ENCODE measurements at regions of chr7 and their contacts with region 1.

Region 1: GRCh38 chr7:130069978-130070860 is at the start of gene KLHDC10:
- DNase-seq: peak; percentile 98
- H3K4me3 ChIP-seq: peak within 1 kb of the TSS; percentile 92
- H3K27ac ChIP-seq: peak within 1 kb of the TSS; percentile 24
- H3K27me3 ChIP-seq: no peaks in the 10 kb centered on the region
- CTCF ChIP-seq: no peak
- polyA plus RNA-seq, gene KLHDC10: 23.3 and 29.7 TPM in 2 replicates

Region 2: GRCh38 chr7:130084037-130084875 is 14.0 kb after region 1 on chr7:
- CTCF ChIA-PET with region 1: interaction called, 26 read pairs
- POLR2A ChIA-PET with region 1: no interaction called
- DNase-seq: no peak
- H3K4me3 ChIP-seq: no peak overlapping the region
- H3K27ac ChIP-seq: no peak overlapping the region
- H3K27me3 ChIP-seq: no peaks in the 10 kb centered on the region
- CTCF ChIP-seq: peak; percentile 34

Region 3: GRCh38 chr7:130096243-130096827 is 26.1 kb after region 1 on chr7:
- CTCF ChIA-PET with region 1: interaction called, 17 read pairs
- POLR2A ChIA-PET with region 1: no interaction called
- DNase-seq: no peak
- H3K4me3 ChIP-seq: no peak overlapping the region
- H3K27ac ChIP-seq: no peak overlapping the region
- H3K27me3 ChIP-seq: no peaks in the 10 kb centered on the region
- CTCF ChIP-seq: peak; percentile 44

Region 4: DNA sequence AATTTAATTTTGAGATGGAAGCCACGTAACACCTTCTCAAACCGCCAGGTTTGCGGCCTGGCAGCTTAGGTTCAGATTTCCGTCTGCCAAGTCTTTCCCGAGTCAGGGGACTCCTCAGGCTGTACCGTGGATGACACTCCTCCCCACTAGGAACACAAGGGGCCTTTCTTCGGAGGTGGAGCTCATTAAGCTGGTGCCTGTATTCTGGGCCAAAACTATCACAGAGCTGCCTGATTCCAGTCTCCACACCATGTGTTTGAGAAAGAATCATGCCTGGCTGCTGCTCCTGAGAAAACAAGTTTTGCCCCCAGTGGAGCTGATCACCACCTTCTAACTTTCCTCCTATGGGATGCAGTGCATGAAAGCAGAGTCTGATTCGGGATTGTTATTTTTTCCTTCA is 90.2 kb after region 1 on chr7:
- CTCF ChIA-PET with region 1: no interaction called
- POLR2A ChIA-PET with region 1: no interaction called
- DNase-seq: no peak
- H3K4me3 ChIP-seq: no peak overlapping the region
- H3K27ac ChIP-seq: no peak overlapping the region
- H3K27me3 ChIP-seq: no peaks in the 10 kb centered on the region
- CTCF ChIP-seq: no peak

Region 5: DNA sequence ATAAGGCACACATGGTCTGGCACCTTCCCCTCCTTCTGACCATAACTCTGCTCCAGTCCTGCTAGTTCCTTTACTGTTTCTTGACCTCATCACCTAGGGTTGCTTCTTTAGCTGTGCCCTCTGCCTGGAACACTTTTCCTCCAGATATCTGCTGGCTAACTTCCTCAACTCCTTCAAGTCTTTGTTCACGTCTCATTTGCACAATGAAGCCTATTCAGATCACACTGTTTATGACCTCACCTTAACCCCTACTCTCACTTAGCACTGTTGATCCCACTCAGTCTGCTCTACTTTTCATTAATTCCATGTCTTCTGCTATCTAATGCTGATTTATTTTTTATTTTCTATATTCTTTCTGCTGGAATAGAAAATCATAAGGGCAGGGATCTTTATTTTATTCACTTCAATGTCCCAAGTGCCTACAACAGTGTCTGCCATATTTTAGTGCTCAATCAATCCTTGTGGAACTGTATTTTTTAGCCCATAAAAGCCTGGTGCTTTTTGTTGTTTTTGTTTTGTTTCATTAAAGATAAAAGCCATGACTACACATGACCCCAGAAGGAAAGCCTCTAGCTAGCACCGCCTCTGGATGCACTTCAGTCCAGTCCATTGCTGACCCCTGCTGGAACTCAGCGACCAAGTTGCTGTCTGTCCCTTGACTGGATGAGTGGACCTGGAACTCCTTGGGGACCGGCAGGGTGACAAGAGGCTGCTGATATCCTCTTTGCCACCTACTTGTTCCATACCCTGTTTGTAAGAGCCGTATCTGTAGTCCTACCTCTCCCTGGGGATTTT is 651.5 kb after region 1 on chr7:
- CTCF ChIA-PET with region 1: interaction called, 44 read pairs
- POLR2A ChIA-PET with region 1: no interaction called
- DNase-seq: peak; percentile 7
- H3K4me3 ChIP-seq: no peak overlapping the region
- H3K27ac ChIP-seq: no peak overlapping the region
- H3K27me3 ChIP-seq: peaks cover 8% of the 10 kb centered on the region
- CTCF ChIP-seq: peak; percentile 71

Region 6: DNA sequence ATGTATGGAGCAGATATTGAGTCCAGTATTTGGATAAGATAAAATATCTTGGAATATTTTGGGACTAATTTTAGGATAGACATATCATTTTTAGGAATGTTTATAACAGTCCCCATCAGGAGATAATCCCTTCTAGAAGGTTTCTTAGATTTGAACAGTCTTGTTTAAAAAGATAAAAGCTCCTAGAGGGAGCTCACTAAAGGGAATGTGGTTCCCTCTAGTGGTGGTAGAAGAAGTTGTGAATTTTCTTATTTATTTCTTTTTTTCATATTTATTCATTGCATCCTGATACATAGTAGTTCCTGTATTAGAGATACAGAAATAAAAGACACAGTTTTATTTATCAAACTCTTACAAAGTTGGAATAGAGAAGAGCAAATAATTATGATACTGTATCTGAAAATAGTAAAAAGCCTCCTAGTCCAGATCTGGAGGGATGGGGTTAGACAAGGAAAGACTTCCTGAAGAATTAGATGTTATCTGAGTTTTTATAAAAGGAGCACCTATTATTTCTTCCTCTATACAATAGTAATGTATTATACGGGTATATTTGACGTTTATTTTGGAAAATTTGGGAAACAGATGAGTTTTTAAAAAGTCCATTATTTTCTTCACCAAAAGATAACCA is 688.3 kb after region 1 on chr7:
- CTCF ChIA-PET with region 1: interaction called, 71 read pairs
- POLR2A ChIA-PET with region 1: interaction called, 3 read pairs
- DNase-seq: peak; percentile 30
- H3K4me3 ChIP-seq: no peak overlapping the region
- H3K27ac ChIP-seq: no peak overlapping the region
- H3K27me3 ChIP-seq: peaks cover 23% of the 10 kb centered on the region
- CTCF ChIP-seq: peak; percentile 69

Region 7: GRCh38 chr7:130831817-130832481 is 761.7 kb after region 1 on chr7:
- CTCF ChIA-PET with region 1: interaction called, 21 read pairs
- POLR2A ChIA-PET with region 1: no interaction called
- DNase-seq: no peak
- H3K4me3 ChIP-seq: no peak overlapping the region
- H3K27ac ChIP-seq: no peak overlapping the region
- H3K27me3 ChIP-seq: no peaks in the 10 kb centered on the region
- CTCF ChIP-seq: peak; percentile 75